ENCODE measurements at regions of chr3 and their contacts with region 1.

Region 1: DNA sequence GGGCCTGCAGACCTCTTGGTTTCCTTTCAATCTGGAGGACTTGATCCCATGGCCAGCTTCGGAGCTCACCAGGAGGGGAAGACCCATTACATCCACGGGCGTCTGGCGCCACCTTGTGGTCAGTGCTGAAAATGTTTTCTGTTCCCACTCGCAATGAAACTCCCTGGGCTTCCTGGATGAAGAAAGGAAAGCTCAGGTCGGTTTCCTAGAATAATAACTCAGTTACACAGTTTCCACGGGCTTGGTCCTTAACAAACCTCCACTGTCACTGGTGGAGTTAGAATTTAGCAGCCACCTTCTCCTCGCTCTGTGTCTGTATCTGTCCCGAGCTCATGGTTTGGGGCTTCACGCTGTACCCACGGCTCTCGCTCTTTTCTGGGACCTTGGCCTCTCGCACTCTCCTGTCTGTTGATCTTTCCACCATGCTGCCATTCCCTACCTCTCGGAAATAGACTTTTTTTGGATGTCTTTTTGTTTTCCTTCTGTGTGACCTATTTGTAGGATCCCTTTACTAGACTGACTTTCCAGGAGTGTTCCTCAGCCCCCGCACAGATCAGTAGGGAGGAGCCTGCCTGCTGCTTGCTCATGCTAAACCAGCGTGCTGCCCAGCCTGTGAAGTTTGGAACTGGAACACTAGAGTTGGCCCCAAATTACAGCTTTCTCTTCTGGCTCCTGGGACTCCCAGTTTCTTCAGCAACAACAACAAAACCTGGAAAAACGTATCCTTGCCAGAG is 56.3 kb downstream of the IL20RB start:
- DNase-seq: peak; percentile 91
- H3K4me3 ChIP-seq: peak overlapping the region; percentile 21 to 44
- H3K27ac ChIP-seq: peak overlapping the region; percentile 85 to 86
- H3K4me1 ChIP-seq: no peaks in the 10 kb centered on the region
- H3K27me3 ChIP-seq: no peaks in the 10 kb centered on the region
- CTCF ChIP-seq: peak; percentile 86 to 93 (median 91)
- POLR2A ChIP-seq: no peak

Region 2: DNA sequence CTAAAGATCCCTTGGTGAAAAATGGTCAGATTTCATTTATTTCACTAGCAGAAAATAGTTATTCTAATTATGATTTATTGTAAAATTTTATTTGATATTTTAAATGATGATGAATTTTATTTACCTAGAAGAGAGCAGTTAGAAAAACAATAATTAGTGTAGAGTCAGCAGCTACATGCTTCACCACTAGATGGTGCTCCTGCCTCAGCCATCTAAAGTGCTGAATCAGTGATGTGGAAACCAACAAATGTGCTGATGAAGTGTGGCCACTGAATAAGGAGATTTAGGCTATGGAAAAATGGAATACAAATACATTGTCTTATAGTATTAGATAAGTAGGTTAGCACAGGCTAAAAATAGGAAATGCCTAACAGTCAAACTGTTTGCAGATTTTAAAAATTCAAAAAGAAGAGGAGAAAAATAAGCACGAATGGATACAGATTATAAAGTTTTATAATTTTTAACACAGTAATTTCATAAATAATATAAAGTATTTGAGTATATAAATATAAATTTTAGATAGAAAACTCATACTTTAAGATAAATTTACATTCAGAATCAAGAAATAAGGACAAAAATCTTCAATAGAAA is 938.8 kb before region 1 on chr3:
- intact Hi-C with region 1: loop called (anchors 5 kb)
- DNase-seq: peak; percentile 70 to 75
- H3K4me3 ChIP-seq: no peak overlapping the region
- H3K27ac ChIP-seq: peak overlapping the region; percentile 8 to 55
- H3K4me1 ChIP-seq: no peaks in the 10 kb centered on the region
- H3K27me3 ChIP-seq: no peaks in the 10 kb centered on the region
- CTCF ChIP-seq: peak; percentile 84 to 95 (median 91)
- POLR2A ChIP-seq: no peak

Region 3: DNA sequence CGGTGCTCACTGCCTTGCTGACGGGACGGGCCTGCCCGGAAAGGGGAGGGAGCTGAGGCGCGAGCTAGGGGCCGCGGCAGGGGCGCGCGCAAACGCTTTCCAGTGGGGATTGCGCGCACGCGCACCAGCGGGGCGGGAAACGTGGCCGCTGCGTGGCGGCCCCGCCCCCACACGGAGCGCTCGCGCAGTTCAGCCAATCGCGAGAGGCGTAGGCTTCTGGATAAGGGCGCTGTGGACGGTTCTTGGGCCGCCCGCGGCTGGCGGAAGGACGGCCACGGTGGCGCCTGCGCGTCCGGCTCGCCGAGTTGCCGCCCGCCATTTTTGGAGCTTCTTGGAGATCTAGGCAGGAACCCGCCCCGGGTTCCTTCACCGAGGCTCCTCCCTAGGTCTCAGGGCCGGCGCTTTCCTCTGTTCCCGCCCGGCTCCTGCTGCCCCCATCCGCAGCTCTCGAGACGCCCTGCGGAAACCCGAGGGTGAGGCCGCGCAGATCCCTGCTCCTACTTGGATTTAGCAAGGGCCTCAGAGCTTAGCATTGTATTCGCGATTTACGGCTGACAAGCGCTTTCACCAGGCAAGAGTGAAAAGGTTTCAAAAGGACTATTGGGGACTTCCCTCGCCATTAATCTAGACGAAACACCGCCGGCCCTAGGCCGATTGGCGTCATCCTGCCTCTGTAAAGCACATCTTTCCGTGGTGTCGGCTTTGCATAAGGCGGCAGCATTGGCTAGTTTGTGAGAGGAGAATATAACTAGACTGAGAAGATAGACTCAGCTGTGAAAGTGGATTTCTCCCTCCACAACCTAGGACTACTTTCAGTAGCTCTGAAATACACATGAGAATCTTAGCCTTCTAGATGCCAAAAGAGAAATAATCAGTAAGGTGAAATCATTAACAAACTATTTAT is 261.4 kb before region 1 on chr3:
- intact Hi-C with region 1: loop called (anchors 10 kb)
- DNase-seq: peak; percentile 98 to 99
- H3K4me3 ChIP-seq: peak overlapping the region; percentile 62
- H3K27ac ChIP-seq: peak overlapping the region; percentile 99
- H3K4me1 ChIP-seq: no peaks in the 10 kb centered on the region
- H3K27me3 ChIP-seq: no peaks in the 10 kb centered on the region
- CTCF ChIP-seq: peak in 3 of 4 experiments; percentile 20 to 98 (median 26)
- POLR2A ChIP-seq: peak; percentile 83 to 85